CD4-positive, alpha-beta T cell (primary cell): ENCODE measurements at regions of chr10 and their contacts with region 1.

Region 1: DNA sequence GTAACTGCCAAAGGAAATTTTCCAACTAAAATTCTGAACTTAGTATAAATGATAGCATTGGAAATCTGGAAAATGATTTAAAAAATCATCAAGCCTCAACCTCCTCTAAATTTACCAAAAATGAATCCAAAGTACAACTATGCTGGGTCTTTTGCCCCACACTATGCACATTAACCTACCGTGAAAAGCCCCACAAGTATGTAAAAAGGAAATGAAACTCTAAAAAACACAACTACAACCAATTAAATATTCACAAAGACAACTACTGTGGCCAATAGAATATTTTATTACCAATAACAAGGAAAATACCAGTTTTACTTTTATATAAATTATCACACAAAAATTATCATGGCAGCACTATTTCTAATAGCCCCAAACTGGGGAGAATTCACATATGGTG is 19.3 kb downstream of the EIF3A start:
- DNase-seq: no peak
- ATAC-seq: no peak
- H3K4me3 ChIP-seq: no peak overlapping the region
- H3K4me3 Mint-ChIP-seq: no peak overlapping the region
- H3K27ac ChIP-seq: no peak overlapping the region
- H3K27ac Mint-ChIP-seq: no peak overlapping the region
- H3K4me1 ChIP-seq: no peaks in the 10 kb centered on the region
- H3K4me1 Mint-ChIP-seq: peaks cover 23% of the 10 kb centered on the region
- H3K27me3 ChIP-seq: no peaks in the 10 kb centered on the region
- H3K27me3 Mint-ChIP-seq: no peaks in the 10 kb centered on the region
- CTCF ChIP-seq: no peak

Region 2: GRCh38 chr10:119028900-119029612 is 32.3 kb before region 1 on chr10:
- CTCF ChIA-PET with region 1: no interaction called
- POLR2A ChIA-PET with region 1: no interaction called
- intact Hi-C with region 1: loop called in 1 of 2 experiments (anchors 5 kb)
- DNase-seq: peak; percentile 56 to 91 (median 76)
- ATAC-seq: peak; percentile 83
- H3K4me3 ChIP-seq: peak overlapping the region; percentile 55
- H3K4me3 Mint-ChIP-seq: peak overlapping the region; percentile 87
- H3K27ac ChIP-seq: no peak overlapping the region
- H3K27ac Mint-ChIP-seq: no peak overlapping the region
- H3K4me1 ChIP-seq: peaks cover 13% of the 10 kb centered on the region
- H3K4me1 Mint-ChIP-seq: peaks cover 20% of the 10 kb centered on the region
- H3K27me3 ChIP-seq: no peaks in the 10 kb centered on the region
- H3K27me3 Mint-ChIP-seq: no peaks in the 10 kb centered on the region
- CTCF ChIP-seq: no peak

Region 3: GRCh38 chr10:119616882-119617570 is 555.7 kb after region 1 on chr10:
- CTCF ChIA-PET with region 1: no interaction called
- POLR2A ChIA-PET with region 1: no interaction called
- intact Hi-C with region 1: no loop called
- DNase-seq: peak in 8 of 14 experiments; percentile 4 to 32 (median 16)
- ATAC-seq: no peak
- H3K4me3 ChIP-seq: no peak overlapping the region
- H3K4me3 Mint-ChIP-seq: no peak overlapping the region
- H3K27ac ChIP-seq: no peak overlapping the region
- H3K27ac Mint-ChIP-seq: no peak overlapping the region
- H3K4me1 ChIP-seq: no peaks in the 10 kb centered on the region
- H3K4me1 Mint-ChIP-seq: no peaks in the 10 kb centered on the region
- H3K27me3 ChIP-seq: no peaks in the 10 kb centered on the region
- H3K27me3 Mint-ChIP-seq: no peaks in the 10 kb centered on the region
- CTCF ChIP-seq: no peak

Region 4: DNA sequence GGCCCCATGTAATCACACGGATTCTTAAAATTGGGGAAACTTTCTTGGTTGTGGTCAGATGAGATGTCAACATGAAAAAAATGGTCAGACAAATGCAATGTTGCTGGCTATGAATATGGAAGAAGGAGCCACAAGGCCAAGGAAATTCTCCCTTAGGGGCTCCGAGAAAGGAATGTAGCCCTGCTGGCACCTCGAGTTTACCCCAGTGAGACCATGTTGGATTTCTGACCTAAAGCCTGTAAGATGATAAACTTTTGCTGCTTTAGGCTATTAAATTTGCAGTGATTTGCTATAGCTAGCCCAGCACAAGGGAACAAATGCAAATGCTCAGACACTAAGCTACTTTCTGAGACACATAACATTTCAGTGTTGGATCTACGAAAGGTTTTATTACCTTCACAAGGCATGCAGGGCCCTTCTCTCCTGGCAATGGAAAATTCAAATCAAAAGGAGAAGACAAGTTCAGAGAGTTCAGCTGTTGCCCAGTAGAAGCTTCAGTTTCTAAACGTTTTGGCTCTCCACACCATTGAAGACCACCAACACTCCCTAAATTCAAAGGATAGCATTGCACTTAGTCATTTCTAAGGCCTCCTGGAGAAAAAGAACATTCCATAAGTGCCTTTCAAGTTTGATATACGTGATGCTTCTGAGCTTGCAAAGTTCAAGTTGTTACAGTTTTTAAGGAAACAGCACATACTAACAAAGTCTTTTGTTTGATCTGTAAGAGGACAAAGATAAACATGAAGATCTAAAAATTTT is 787.9 kb after region 1 on chr10:
- CTCF ChIA-PET with region 1: no interaction called
- POLR2A ChIA-PET with region 1: no interaction called
- intact Hi-C with region 1: loop called in 1 of 2 experiments (anchors 10 kb)
- DNase-seq: no peak
- ATAC-seq: no peak
- H3K4me3 ChIP-seq: no peak overlapping the region
- H3K4me3 Mint-ChIP-seq: no peak overlapping the region
- H3K27ac ChIP-seq: no peak overlapping the region
- H3K27ac Mint-ChIP-seq: no peak overlapping the region
- H3K4me1 ChIP-seq: no peaks in the 10 kb centered on the region
- H3K4me1 Mint-ChIP-seq: no peaks in the 10 kb centered on the region
- H3K27me3 ChIP-seq: no peaks in the 10 kb centered on the region
- H3K27me3 Mint-ChIP-seq: no peaks in the 10 kb centered on the region
- CTCF ChIP-seq: no peak